Endothelial cell of umbilical vein (primary cell): ENCODE measurements at regions of chr3 and their contacts with region 1.

Region 1: DNA sequence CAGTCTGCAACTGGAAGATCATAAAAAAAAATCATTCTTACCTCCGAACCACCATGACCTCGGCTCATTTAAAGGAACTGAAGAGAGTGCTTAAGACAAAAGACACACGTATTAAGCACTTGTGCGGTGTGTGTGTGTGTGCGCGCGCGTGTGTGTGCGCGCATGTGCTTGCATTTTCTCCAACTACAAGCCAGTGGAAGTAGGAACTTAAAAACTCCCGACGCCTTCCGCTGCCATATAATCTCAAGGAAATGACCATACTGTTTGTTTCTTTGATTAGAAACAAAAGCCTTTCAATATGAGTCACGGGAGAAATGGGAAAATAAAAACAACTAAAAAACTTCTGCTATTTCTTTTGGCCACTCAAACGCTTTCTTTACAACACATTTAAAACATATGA is 32.4 kb downstream of the FRMD4B start:
- DNase-seq: peak; percentile 98
- H3K4me3 ChIP-seq: peak overlapping the region; percentile 45 to 97 (median 88)
- H3K27ac ChIP-seq: peak overlapping the region; percentile 100
- H3K4me1 ChIP-seq: peaks cover 32% of the 10 kb centered on the region
- H3K27me3 ChIP-seq: no peaks in the 10 kb centered on the region
- CTCF ChIP-seq: no peak
- POLR2A ChIP-seq: peak; percentile 98

Region 2: GRCh38 chr3:69330891-69331400 is 22.6 kb before region 1 on chr3:
- CTCF ChIA-PET with region 1: no interaction called
- POLR2A ChIA-PET with region 1: no interaction called
- dilution Hi-C with region 1: no loop called
- intact Hi-C with region 1: no loop called
- DNase-seq: peak; percentile 84
- H3K4me3 ChIP-seq: no peak overlapping the region
- H3K27ac ChIP-seq: peak overlapping the region; percentile 33
- H3K4me1 ChIP-seq: peaks cover 33% of the 10 kb centered on the region
- H3K27me3 ChIP-seq: no peaks in the 10 kb centered on the region
- CTCF ChIP-seq: no peak
- POLR2A ChIP-seq: no peak

Region 3: GRCh38 chr3:69368129-69368741 is 14.7 kb after region 1 on chr3:
- CTCF ChIA-PET with region 1: interaction called, 10 read pairs
- POLR2A ChIA-PET with region 1: no interaction called
- dilution Hi-C with region 1: no loop called
- intact Hi-C with region 1: loop called (anchors 1 kb)
- DNase-seq: peak; percentile 25
- H3K4me3 ChIP-seq: no peak overlapping the region
- H3K27ac ChIP-seq: no peak overlapping the region
- H3K4me1 ChIP-seq: peaks cover 31% of the 10 kb centered on the region
- H3K27me3 ChIP-seq: no peaks in the 10 kb centered on the region
- CTCF ChIP-seq: no peak
- POLR2A ChIP-seq: no peak

Region 4: GRCh38 chr3:69385723-69386555 is 32.4 kb after region 1 on chr3 and contains the start of gene FRMD4B:
- CTCF ChIA-PET with region 1: interaction called, 6 read pairs
- POLR2A ChIA-PET with region 1: no interaction called
- dilution Hi-C with region 1: no loop called
- intact Hi-C with region 1: loop called (anchors 2 kb)
- DNase-seq: peak; percentile 74
- H3K4me3 ChIP-seq: peak within 1 kb of the TSS; percentile 18 to 50 (median 33)
- H3K27ac ChIP-seq: no peak within 1 kb of the TSS
- H3K4me1 ChIP-seq: peaks cover 17% of the 10 kb centered on the region
- H3K27me3 ChIP-seq: no peaks in the 10 kb centered on the region
- CTCF ChIP-seq: peak; percentile 38 to 50
- POLR2A ChIP-seq: no peak
- total RNA-seq, gene FRMD4B: 77.7 and 89.7 TPM in 2 replicates